Panc1 (cell line): ENCODE measurements at regions of chr17 and their contacts with region 1.

Region 1: GRCh38 chr17:50719144-50719923 is at the start of gene LUC7L3:
- DNase-seq: no peak
- ATAC-seq: peak; percentile 98
- H3K4me3 ChIP-seq: peak within 1 kb of the TSS; percentile 90 to 98
- H3K27ac ChIP-seq: peak within 1 kb of the TSS; percentile 85
- H3K4me1 ChIP-seq: peaks cover 25% of the 10 kb centered on the region
- H3K27me3 ChIP-seq: no peaks in the 10 kb centered on the region
- CTCF ChIP-seq: no peak
- total RNA-seq, gene LUC7L3: 136 TPM

Region 2: DNA sequence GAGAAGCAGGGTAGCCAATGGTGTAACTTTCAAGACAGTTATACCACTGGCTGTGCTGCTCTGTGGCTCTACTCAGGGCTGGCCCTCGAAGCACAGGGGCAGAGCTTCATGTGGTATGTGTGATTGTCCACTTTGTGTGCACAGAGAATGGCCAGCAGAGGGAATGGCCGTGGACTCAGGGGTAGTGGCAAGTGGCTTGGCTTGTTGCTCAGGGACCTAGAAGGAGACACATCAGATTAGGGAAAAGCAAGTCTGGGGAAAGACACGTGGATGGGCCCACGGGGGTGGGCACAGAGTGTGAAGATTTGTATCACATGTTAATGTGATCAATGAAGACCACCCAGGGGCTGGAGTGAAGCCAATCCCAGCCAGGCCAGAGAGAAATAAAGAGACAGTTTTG is 393.4 kb before region 1 on chr17:
- CTCF ChIA-PET with region 1: interaction called, 10 read pairs
- POLR2A ChIA-PET with region 1: no interaction called
- in situ Hi-C with region 1: no loop called
- intact Hi-C with region 1: no loop called
- DNase-seq: no peak
- ATAC-seq: no peak
- H3K4me3 ChIP-seq: no peak overlapping the region
- H3K27ac ChIP-seq: no peak overlapping the region
- H3K4me1 ChIP-seq: no peaks in the 10 kb centered on the region
- H3K27me3 ChIP-seq: no peaks in the 10 kb centered on the region
- CTCF ChIP-seq: no peak

Region 3: DNA sequence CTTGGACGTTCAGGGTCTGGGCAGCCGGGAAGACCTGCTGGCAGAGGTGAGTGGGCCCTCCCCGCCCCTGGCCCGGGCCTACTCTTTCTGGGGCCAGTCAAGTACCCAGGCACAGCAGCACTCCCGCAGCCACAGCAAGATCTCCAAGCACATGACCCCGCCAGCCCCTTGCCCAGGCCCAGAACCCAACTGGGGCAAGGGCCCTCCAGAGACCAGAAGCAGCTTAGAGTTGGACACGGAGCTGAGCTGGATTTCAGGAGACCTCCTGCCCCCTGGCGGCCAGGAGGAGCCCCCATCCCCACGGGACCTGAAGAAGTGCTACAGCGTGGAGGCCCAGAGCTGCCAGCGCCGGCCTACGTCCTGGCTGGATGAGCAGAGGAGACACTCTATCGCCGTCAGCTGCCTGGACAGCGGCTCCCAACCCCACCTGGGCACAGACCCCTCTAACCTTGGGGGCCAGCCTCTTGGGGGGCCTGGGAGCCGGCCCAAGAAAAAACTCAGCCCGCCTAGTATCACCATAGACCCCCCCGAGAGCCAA is 93.2 kb before region 1 on chr17:
- CTCF ChIA-PET with region 1: no interaction called
- POLR2A ChIA-PET with region 1: no interaction called
- in situ Hi-C with region 1: no loop called
- intact Hi-C with region 1: no loop called
- DNase-seq: no peak
- ATAC-seq: peak; percentile 82
- H3K4me3 ChIP-seq: no peak overlapping the region
- H3K27ac ChIP-seq: peak overlapping the region; percentile 55
- H3K4me1 ChIP-seq: peaks cover 66% of the 10 kb centered on the region
- H3K27me3 ChIP-seq: no peaks in the 10 kb centered on the region
- CTCF ChIP-seq: peak; percentile 92

Region 4: GRCh38 chr17:50689251-50689650 is 30.1 kb before region 1 on chr17:
- CTCF ChIA-PET with region 1: interaction called, 10 read pairs
- POLR2A ChIA-PET with region 1: no interaction called
- in situ Hi-C with region 1: no loop called
- intact Hi-C with region 1: no loop called
- DNase-seq: no peak
- ATAC-seq: peak; percentile 16; the same call in 1 of the 2 replicates
- H3K4me3 ChIP-seq: no peak overlapping the region
- H3K27ac ChIP-seq: peak overlapping the region; percentile 29
- H3K4me1 ChIP-seq: peaks cover 83% of the 10 kb centered on the region
- H3K27me3 ChIP-seq: no peaks in the 10 kb centered on the region
- CTCF ChIP-seq: no peak

Region 5: GRCh38 chr17:50731575-50732460 is 12.5 kb after region 1 on chr17:
- CTCF ChIA-PET with region 1: no interaction called
- POLR2A ChIA-PET with region 1: interaction called, 13 read pairs
- in situ Hi-C with region 1: no loop called
- intact Hi-C with region 1: no loop called
- DNase-seq: no peak
- ATAC-seq: peak; percentile 63
- H3K4me3 ChIP-seq: no peak overlapping the region
- H3K27ac ChIP-seq: no peak overlapping the region
- H3K4me1 ChIP-seq: peaks cover 44% of the 10 kb centered on the region
- H3K27me3 ChIP-seq: no peaks in the 10 kb centered on the region
- CTCF ChIP-seq: no peak

Region 6: DNA sequence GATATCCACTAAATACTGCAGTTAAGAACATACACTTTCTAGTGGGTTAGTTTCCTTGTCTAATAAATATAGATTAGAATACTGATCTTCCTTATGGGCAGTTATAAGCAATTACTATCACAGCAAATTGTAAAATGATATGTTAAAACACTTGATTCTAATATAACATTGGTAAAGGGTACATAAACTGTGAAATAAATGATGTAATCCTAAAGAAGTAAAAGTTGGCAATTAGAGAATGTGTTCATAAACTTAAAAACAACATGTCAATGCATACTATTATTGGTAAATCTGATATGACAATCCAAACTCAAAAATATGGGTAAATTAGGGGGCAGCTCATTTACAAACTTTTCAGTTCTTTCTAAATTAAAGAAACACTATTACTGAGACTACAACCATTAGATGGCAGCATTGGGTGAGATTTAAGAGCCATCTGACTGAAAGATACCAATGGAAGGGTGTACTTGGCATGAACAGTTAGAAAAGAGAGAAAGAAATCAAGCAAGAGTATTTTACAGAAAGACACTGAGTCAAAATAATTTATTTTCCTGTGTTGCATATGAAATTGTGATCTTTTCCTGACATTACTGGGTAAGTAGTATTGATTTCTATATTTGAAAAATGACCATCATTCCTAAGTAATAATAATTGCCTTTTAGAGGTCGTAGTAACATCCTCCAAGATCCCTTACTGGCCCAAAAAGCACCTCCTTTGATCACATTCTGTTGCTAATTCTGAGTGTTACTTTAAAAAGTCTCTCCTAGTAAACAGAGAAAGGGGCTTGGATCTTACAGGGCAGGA is 281.7 kb after region 1 on chr17:
- CTCF ChIA-PET with region 1: interaction called, 13 read pairs
- POLR2A ChIA-PET with region 1: no interaction called
- in situ Hi-C with region 1: no loop called
- intact Hi-C with region 1: no loop called
- DNase-seq: peak; percentile 42
- ATAC-seq: peak; percentile 82
- H3K4me3 ChIP-seq: no peak overlapping the region
- H3K27ac ChIP-seq: no peak overlapping the region
- H3K4me1 ChIP-seq: no peaks in the 10 kb centered on the region
- H3K27me3 ChIP-seq: no peaks in the 10 kb centered on the region
- CTCF ChIP-seq: peak; percentile 61; the same call in 1 of the 2 replicates

Region 7: GRCh38 chr17:51103451-51103850 is 384.1 kb after region 1 on chr17:
- CTCF ChIA-PET with region 1: no interaction called
- POLR2A ChIA-PET with region 1: no interaction called
- in situ Hi-C with region 1: no loop called
- intact Hi-C with region 1: no loop called
- DNase-seq: no peak
- ATAC-seq: no peak
- H3K4me3 ChIP-seq: no peak overlapping the region
- H3K27ac ChIP-seq: no peak overlapping the region
- H3K4me1 ChIP-seq: no peaks in the 10 kb centered on the region
- H3K27me3 ChIP-seq: no peaks in the 10 kb centered on the region
- CTCF ChIP-seq: no peak